MCF 10A (cell line): ENCODE measurements at regions of chr11 and their contacts with region 1.

Region 1: DNA sequence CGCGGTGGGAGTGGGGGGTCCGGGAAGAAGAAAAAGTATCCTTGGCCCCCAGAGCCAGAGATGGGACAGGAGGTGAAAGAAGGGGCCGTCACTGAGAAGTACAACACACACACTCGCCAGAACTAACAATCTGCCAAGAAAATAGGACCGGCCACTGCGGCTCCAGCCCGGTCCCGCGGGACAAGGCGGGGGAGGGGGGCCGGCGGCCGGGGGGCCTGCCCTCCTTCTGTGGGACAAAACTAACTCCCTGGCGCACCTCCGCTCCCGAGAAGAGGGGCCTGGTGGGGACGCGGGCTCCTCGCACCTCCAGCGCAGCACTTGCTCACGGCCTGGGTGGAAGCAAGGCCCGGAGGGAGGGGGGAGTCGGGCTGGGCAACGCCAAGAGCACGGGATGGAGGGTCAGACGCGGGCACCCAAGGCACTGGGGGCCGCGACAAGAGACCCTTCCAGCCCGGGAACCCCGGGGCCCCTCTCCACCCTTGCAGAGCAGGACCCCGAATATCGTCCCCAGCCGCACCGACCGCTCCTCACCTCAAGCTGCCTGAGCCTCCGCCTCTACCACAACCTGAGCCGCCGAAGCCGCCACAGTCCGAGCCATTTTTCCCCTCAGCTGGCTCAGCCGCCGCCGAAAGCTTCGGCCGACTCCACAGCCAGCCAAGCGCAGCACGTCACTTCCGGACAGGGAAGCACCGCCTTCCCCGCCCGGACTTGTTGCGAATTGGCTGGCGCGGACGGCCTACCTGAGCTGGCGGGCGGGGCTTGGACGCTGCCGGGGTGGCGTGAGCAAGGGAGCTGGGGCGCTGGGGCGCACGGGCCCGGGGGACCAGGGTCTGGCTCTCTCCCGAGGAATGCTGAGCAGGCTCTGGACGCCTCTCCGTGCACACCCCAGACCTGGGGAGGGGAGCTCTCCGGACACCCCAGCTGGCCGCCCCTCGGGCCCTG is at the start of gene PIK3C2A:
- DNase-seq: peak; percentile 95
- H3K4me3 Mint-ChIP-seq: peak within 1 kb of the TSS; percentile 95
- H3K27ac Mint-ChIP-seq: peak within 1 kb of the TSS; percentile 99
- H3K4me1 Mint-ChIP-seq: peaks cover 30% of the 10 kb centered on the region
- H3K27me3 Mint-ChIP-seq: no peaks in the 10 kb centered on the region
- CTCF ChIP-seq: no peak
- total RNA-seq, gene PIK3C2A: 51.7 and 58.1 TPM in 2 replicates

Region 2: GRCh38 chr11:17077520-17078401 is 129.8 kb before region 1 on chr11 and contains the start of gene RPS13:
- CTCF ChIA-PET with region 1: no interaction called
- POLR2A ChIA-PET with region 1: interaction called, 25 read pairs
- intact Hi-C with region 1: loop called (anchors 5 kb)
- DNase-seq: peak; percentile 99
- H3K4me3 Mint-ChIP-seq: peak within 1 kb of the TSS; percentile 93
- H3K27ac Mint-ChIP-seq: peak within 1 kb of the TSS; percentile 99
- H3K4me1 Mint-ChIP-seq: peaks cover 27% of the 10 kb centered on the region
- H3K27me3 Mint-ChIP-seq: no peaks in the 10 kb centered on the region
- CTCF ChIP-seq: no peak
- total RNA-seq, gene RPS13: 1,551 and 1,734 TPM in 2 replicates

Region 3: DNA sequence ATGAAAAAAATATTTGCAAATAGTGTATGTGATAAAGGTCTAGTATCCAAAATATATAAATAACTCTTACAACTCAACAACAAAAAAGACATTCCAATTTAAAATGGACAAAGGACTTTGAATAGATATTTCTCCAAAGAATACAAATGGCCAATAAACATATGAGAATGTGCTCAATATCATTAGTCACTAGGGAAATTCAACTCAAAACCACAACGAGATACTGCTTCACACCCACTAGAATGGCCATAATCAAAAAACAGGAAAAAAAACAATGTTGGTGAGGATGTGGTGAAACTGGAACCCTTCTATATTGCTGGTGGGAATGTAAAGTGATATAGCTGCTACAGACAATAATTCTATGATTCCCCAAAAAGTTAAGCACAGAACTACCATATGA is 91.5 kb before region 1 on chr11:
- CTCF ChIA-PET with region 1: no interaction called
- POLR2A ChIA-PET with region 1: interaction called, 4 read pairs
- intact Hi-C with region 1: loop called (anchors 10 kb)
- DNase-seq: no peak
- H3K4me3 Mint-ChIP-seq: no peak overlapping the region
- H3K27ac Mint-ChIP-seq: no peak overlapping the region
- H3K4me1 Mint-ChIP-seq: no peaks in the 10 kb centered on the region
- H3K27me3 Mint-ChIP-seq: no peaks in the 10 kb centered on the region
- CTCF ChIP-seq: no peak

Region 4: GRCh38 chr11:17171916-17172315 is 35.7 kb before region 1 on chr11:
- CTCF ChIA-PET with region 1: no interaction called
- POLR2A ChIA-PET with region 1: interaction called, 5 read pairs
- intact Hi-C with region 1: loop called (anchors 5 kb)
- DNase-seq: no peak
- H3K4me3 Mint-ChIP-seq: no peak overlapping the region
- H3K27ac Mint-ChIP-seq: peak overlapping the region; percentile 35
- H3K4me1 Mint-ChIP-seq: peaks cover 9% of the 10 kb centered on the region
- H3K27me3 Mint-ChIP-seq: no peaks in the 10 kb centered on the region
- CTCF ChIP-seq: no peak

Region 5: GRCh38 chr11:17197431-17197898 is 10.1 kb before region 1 on chr11:
- CTCF ChIA-PET with region 1: no interaction called
- POLR2A ChIA-PET with region 1: interaction called, 24 read pairs
- intact Hi-C with region 1: no loop called
- DNase-seq: no peak
- H3K4me3 Mint-ChIP-seq: no peak overlapping the region
- H3K27ac Mint-ChIP-seq: no peak overlapping the region
- H3K4me1 Mint-ChIP-seq: peaks cover 10% of the 10 kb centered on the region
- H3K27me3 Mint-ChIP-seq: no peaks in the 10 kb centered on the region
- CTCF ChIP-seq: no peak

Region 6: DNA sequence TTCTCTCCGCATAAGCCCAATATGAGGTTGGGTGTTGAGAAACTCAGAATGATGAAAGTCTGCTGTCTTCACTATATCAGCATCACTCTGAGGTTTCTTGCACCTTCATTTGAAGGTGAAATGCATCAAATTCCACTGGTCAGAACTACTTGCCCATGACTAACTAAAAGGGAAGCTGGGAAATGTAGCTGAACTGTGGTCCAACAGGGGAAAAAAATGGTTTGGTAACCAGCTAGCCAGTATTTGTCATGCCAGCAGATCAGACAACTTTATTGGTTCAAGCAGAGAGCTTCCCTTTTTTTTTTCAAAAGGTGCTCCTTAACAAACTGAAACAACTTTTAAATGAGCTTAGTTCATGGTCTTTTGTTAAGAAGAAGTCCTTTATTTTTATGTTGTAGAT is 14.4 kb after region 1 on chr11:
- CTCF ChIA-PET with region 1: interaction called, 7 read pairs
- POLR2A ChIA-PET with region 1: interaction called, 13 read pairs
- intact Hi-C with region 1: no loop called
- DNase-seq: no peak
- H3K4me3 Mint-ChIP-seq: no peak overlapping the region
- H3K27ac Mint-ChIP-seq: no peak overlapping the region
- H3K4me1 Mint-ChIP-seq: peaks cover 7% of the 10 kb centered on the region
- H3K27me3 Mint-ChIP-seq: no peaks in the 10 kb centered on the region
- CTCF ChIP-seq: no peak

Region 7: GRCh38 chr11:17244046-17244445 is 36.5 kb after region 1 on chr11:
- CTCF ChIA-PET with region 1: no interaction called
- POLR2A ChIA-PET with region 1: no interaction called
- intact Hi-C with region 1: no loop called
- DNase-seq: no peak
- H3K4me3 Mint-ChIP-seq: no peak overlapping the region
- H3K27ac Mint-ChIP-seq: no peak overlapping the region
- H3K4me1 Mint-ChIP-seq: no peaks in the 10 kb centered on the region
- H3K27me3 Mint-ChIP-seq: no peaks in the 10 kb centered on the region
- CTCF ChIP-seq: no peak